ENCODE measurements at regions of chr1 and their contacts with region 1.

Region 1: GRCh38 chr1:16366722-16367257 is at the start of gene SZRD1:
- DNase-seq: peak; percentile 89 to 99
- ATAC-seq: peak; percentile 83 to 95 (median 85)
- H3K4me3 ChIP-seq: peak within 1 kb of the TSS; percentile 90
- H3K4me3 Mint-ChIP-seq: peak within 1 kb of the TSS; percentile 96
- H3K27ac ChIP-seq: peak within 1 kb of the TSS; percentile 98
- H3K27ac Mint-ChIP-seq: peak within 1 kb of the TSS; percentile 98 to 99
- H3K4me1 ChIP-seq: peaks cover 10% of the 10 kb centered on the region
- H3K4me1 Mint-ChIP-seq: peaks cover 21 to 23% of the 10 kb centered on the region in 2 donors
- H3K27me3 ChIP-seq: no peaks in the 10 kb centered on the region
- H3K27me3 Mint-ChIP-seq: no peaks in the 10 kb centered on the region
- CTCF ChIP-seq: no peak
- total RNA-seq, gene SZRD1: 170 to 187 (median 177) TPM

Region 2: GRCh38 chr1:15835741-15836510 is 530.9 kb before region 1 on chr1:
- intact Hi-C with region 1: loop called (anchors 10 kb)
- DNase-seq: peak; percentile 96 to 100
- ATAC-seq: peak; percentile 51 to 77 (median 58)
- H3K4me3 ChIP-seq: peak overlapping the region; percentile 80
- H3K4me3 Mint-ChIP-seq: peak overlapping the region; percentile 96
- H3K27ac ChIP-seq: peak overlapping the region; percentile 96
- H3K27ac Mint-ChIP-seq: peak overlapping the region; percentile 95 to 99
- H3K4me1 ChIP-seq: peaks cover 32% of the 10 kb centered on the region
- H3K4me1 Mint-ChIP-seq: peaks cover 30 to 35% of the 10 kb centered on the region in 2 donors
- H3K27me3 ChIP-seq: no peaks in the 10 kb centered on the region
- H3K27me3 Mint-ChIP-seq: no peaks in the 10 kb centered on the region
- CTCF ChIP-seq: no peak

Region 3: DNA sequence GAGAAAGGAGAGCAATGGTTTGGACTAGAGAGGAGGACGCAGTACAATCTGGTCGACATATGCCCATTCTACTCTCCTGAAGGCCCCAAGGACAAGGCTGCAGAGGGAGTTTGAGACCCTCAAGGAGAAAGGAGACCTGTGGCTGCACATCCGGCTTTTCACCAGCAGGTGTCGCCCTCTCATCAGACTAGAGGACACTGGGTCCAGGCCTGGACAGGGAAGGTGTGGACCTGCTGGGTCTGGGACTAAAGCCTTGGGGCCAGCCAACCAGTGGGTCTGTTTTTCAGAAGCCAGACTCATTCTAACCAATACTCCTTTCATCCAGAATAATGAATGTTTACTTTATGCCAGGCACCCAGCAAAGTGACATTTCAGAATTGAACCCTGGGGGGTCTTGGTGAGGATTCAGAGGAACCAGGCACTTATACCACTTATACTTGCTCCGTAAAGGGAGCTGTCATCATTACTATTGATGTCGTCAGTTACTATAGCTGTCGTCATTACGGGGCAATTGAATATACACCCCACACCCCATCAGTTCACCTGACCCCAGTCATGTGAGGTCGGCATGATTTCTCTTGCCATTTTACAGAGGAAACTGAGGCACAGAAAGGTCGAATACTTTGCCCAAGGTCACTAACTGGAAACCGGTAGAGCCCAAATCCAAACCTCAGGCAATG is 357.6 kb before region 1 on chr1:
- intact Hi-C with region 1: loop called (anchors 2 kb)
- DNase-seq: peak; percentile 71 to 83
- ATAC-seq: peak; percentile 32 to 74 (median 66)
- H3K4me3 ChIP-seq: no peak overlapping the region
- H3K4me3 Mint-ChIP-seq: no peak overlapping the region
- H3K27ac ChIP-seq: no peak overlapping the region
- H3K27ac Mint-ChIP-seq: no peak overlapping the region
- H3K4me1 ChIP-seq: peaks cover 23% of the 10 kb centered on the region
- H3K4me1 Mint-ChIP-seq: peaks cover 0 to 15% of the 10 kb centered on the region in 2 donors
- H3K27me3 ChIP-seq: no peaks in the 10 kb centered on the region
- H3K27me3 Mint-ChIP-seq: no peaks in the 10 kb centered on the region
- CTCF ChIP-seq: peak; percentile 98

Region 4: GRCh38 chr1:16206547-16207317 is 160.1 kb before region 1 on chr1:
- intact Hi-C with region 1: loop called (anchors 1 kb)
- DNase-seq: peak; percentile 88 to 97
- ATAC-seq: peak; percentile 90 to 94 (median 91)
- H3K4me3 ChIP-seq: peak overlapping the region; percentile 70
- H3K4me3 Mint-ChIP-seq: peak overlapping the region; percentile 86
- H3K27ac ChIP-seq: peak overlapping the region; percentile 88
- H3K27ac Mint-ChIP-seq: peak overlapping the region; percentile 86 to 95
- H3K4me1 ChIP-seq: peaks cover 16% of the 10 kb centered on the region
- H3K4me1 Mint-ChIP-seq: peaks cover 0 to 34% of the 10 kb centered on the region in 2 donors
- H3K27me3 ChIP-seq: no peaks in the 10 kb centered on the region
- H3K27me3 Mint-ChIP-seq: no peaks in the 10 kb centered on the region
- CTCF ChIP-seq: no peak

Region 5: GRCh38 chr1:16351994-16352841 is 14.6 kb before region 1 on chr1 and contains the start of gene FBXO42:
- intact Hi-C with region 1: loop called (anchors 1 kb)
- DNase-seq: peak; percentile 93 to 97
- ATAC-seq: peak; percentile 87 to 95 (median 92)
- H3K4me3 ChIP-seq: peak within 1 kb of the TSS; percentile 82
- H3K4me3 Mint-ChIP-seq: peak within 1 kb of the TSS; percentile 94
- H3K27ac ChIP-seq: peak within 1 kb of the TSS; percentile 94
- H3K27ac Mint-ChIP-seq: peak within 1 kb of the TSS; percentile 89 to 98
- H3K4me1 ChIP-seq: peaks cover 24% of the 10 kb centered on the region
- H3K4me1 Mint-ChIP-seq: peaks cover 33 to 41% of the 10 kb centered on the region in 2 donors
- H3K27me3 ChIP-seq: no peaks in the 10 kb centered on the region
- H3K27me3 Mint-ChIP-seq: no peaks in the 10 kb centered on the region
- CTCF ChIP-seq: peak; percentile 45
- total RNA-seq, gene FBXO42: 19.5 to 24.5 (median 24.1) TPM

Region 6: GRCh38 chr1:16440470-16441281 is 73.9 kb after region 1 on chr1 and contains the start of gene NECAP2:
- intact Hi-C with region 1: loop called (anchors 1 kb)
- DNase-seq: peak; percentile 95
- ATAC-seq: peak; percentile 86 to 97 (median 92)
- H3K4me3 ChIP-seq: peak within 1 kb of the TSS; percentile 100
- H3K4me3 Mint-ChIP-seq: peak within 1 kb of the TSS; percentile 92
- H3K27ac ChIP-seq: peak within 1 kb of the TSS; percentile 98
- H3K27ac Mint-ChIP-seq: peak within 1 kb of the TSS; percentile 94 to 96
- H3K4me1 ChIP-seq: peaks cover 36% of the 10 kb centered on the region
- H3K4me1 Mint-ChIP-seq: peaks cover 18 to 29% of the 10 kb centered on the region in 2 donors
- H3K27me3 ChIP-seq: no peaks in the 10 kb centered on the region
- H3K27me3 Mint-ChIP-seq: no peaks in the 10 kb centered on the region
- CTCF ChIP-seq: peak; percentile 91
- total RNA-seq, gene NECAP2: 62.1 to 73.1 (median 73.0) TPM

Region 7: DNA sequence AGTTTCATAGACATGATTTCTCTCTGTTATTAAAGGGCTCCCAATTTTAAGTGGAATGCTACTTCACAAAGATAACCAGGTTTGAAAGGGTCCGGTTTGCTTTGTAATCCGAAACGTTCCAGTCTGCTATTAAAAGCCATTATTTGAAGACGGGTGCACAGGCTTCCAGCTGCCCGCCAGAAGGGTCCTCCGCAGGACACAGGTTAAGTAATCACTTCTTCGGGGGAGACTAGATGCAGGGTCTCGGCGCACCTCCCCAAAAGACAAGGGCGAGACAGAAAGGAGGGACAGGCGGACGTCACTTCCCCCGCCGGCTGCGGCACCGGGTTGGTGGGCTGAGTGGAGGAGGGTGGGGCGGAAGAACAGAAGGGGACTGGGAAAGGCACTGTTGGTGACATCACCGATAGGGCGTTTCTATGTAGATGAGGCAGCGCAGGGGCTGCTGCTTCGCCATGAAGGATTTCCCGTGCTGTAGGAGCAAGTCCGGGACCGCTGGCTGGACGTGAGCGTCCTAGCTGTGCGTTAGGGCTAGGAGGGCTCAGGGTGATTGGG is 537.8 kb after region 1 on chr1:
- intact Hi-C with region 1: loop called (anchors 5 kb)
- DNase-seq: peak; percentile 98
- ATAC-seq: peak; percentile 89 to 98 (median 90)
- H3K4me3 ChIP-seq: peak overlapping the region; percentile 49
- H3K4me3 Mint-ChIP-seq: no peak overlapping the region
- H3K27ac ChIP-seq: peak overlapping the region; percentile 90
- H3K27ac Mint-ChIP-seq: no peak overlapping the region
- H3K4me1 ChIP-seq: peaks cover 17% of the 10 kb centered on the region
- H3K4me1 Mint-ChIP-seq: peaks cover 18 to 25% of the 10 kb centered on the region in 2 donors
- H3K27me3 ChIP-seq: no peaks in the 10 kb centered on the region
- H3K27me3 Mint-ChIP-seq: no peaks in the 10 kb centered on the region
- CTCF ChIP-seq: no peak